ENCODE measurements at regions of chr7 and their contacts with region 1.

Region 1: DNA sequence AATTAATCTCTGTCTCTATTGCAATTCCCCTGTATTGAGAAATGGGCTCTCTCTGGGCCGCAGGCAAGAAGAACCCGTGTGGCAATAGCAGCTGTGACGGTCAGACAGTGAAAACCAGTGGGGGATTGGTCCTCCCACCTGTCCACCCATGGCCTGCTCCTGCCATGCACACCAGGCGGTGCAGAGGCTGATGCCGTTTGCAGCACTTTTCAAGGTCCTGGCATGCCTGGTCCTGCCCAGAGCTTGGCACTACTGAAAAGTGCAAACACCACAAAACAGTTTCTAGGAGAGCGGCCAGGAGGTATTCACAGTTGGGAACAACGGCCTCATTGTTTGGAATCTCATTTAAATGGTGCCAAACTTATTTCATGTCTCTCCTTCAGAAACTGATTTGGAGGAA is 41.5 kb downstream of the PSPH start:
- DNase-seq: no peak
- CTCF ChIP-seq: no peak

Region 2: DNA sequence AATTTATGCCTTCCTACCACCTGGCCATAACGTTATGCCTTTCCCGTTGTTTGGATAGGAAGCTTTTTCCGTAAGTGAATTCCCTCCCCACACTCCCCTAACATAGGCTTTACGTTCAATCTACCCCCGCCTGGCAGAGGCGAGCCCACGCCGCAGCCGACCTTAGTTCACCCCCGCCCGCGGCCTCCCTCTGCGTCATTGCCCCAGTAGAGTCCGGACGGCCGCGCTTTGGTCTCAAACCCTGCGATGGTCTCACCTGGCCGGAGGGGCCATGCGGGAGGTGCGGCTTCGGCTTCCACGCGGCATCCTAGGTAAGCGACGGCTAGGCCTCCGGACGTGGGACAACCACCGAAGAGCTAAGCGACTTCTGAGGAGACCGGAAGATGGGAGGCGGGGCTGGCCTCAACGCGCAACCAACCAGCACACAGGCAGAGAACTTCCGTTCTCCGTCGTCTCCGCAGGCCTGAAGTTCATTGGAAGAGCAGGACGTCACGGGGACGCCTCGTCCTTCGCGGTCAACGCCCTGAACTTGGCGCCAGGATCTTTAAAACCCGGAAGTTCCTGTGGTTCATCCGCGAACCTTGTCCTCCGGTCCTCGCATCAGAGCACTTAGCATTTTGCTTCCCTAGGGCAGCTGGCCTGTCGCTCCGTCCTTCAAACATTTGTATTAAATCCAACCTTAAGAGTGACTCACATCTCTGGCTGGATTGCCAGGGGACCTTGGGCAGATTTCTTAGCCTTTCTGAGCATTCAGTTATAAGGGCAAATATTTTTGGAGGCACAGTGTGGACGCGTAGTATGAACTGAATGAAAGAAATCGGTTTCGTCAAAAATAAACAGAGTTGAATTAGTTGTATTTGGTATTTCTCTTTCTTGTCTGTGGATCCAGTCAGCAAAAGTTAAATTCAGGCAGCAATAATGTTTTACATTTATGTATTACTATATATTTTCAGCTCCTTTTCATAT is 96.7 kb after region 1 on chr7 and contains the start of gene CHCHD2:
- in situ Hi-C with region 1: loop called (anchors 25 kb)
- DNase-seq: peak; percentile 97
- CTCF ChIP-seq: no peak

Measured in GM13976 (cell line).